ENCODE measurements at regions of chr12 and their contacts with region 1.

Region 1: DNA sequence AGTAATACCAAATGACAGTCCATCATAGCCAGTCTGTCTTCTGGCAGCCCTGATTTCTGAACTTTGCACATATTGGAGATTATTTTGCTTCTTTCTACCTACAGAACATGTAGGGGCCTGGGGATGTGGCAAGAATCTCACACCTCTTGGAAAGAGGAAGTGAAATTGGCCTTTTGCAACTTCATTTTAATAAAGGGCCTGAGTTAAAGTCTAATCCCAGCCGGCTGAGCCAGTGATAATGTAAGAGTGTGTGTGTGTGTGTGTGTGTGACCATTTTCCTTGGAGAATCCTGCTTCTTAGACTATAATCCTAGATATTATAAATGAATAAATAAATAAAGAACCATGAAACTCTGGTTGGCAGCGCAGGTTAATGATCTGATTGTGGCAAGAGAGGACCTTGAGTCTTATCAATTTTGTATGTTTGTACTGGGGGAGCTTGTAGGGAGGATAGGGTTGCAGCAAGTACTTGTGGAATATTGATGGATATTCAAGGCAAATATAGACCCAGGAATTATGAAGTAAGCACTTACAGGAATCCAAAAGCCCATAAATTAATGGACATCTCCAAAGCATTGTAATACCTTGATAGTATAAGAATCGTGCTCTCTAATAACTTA is 233.2 kb upstream of the AMIGO2 start:
- DNase-seq: peak in 1 of 9 experiments; percentile 18
- ATAC-seq: no peak
- H3K4me3 ChIP-seq: no peak overlapping the region
- H3K4me3 Mint-ChIP-seq: no peak overlapping the region
- H3K27ac ChIP-seq: no peak overlapping the region
- H3K27ac Mint-ChIP-seq: no peak overlapping the region
- H3K4me1 ChIP-seq: peaks cover 6% of the 10 kb centered on the region
- H3K4me1 Mint-ChIP-seq: peaks cover 47% of the 10 kb centered on the region
- H3K27me3 ChIP-seq: no peaks in the 10 kb centered on the region
- H3K27me3 Mint-ChIP-seq: no peaks in the 10 kb centered on the region
- CTCF ChIP-seq: no peak

Region 2: DNA sequence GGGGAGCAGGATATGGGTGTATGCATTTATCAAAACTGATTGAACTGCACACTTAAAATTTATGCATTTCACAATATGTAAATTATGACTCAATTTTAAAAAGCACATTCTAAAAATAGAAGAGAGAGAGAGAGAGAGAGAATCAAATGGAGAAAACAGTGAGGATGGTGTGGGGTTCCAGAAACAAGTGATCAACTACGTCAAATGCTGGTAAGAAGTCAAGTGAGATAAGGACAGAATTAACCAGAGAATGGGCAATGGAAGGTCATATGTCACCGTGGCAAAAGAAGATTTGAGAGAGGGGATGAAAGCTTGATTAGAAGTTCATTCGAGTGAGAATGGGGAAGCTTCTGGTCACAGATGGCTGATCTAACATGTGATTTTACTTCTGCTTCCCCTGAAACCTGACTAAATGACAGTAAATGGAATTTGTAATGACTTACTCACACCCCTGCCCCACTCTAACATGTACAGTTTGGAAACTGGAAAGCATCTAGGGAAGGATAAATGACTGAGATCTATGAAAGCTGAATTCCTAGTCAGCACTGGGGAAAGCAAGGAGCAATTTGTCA is 43.3 kb after region 1 on chr12:
- CTCF ChIA-PET with region 1: no interaction called
- POLR2A ChIA-PET with region 1: no interaction called
- intact Hi-C with region 1: loop called in 1 of 2 experiments (anchors 5 kb)
- DNase-seq: peak in 1 of 9 experiments; percentile 47
- ATAC-seq: no peak
- H3K4me3 ChIP-seq: no peak overlapping the region
- H3K4me3 Mint-ChIP-seq: peak overlapping the region; percentile 58
- H3K27ac ChIP-seq: peak overlapping the region in 1 of 2 experiments; percentile 54
- H3K27ac Mint-ChIP-seq: peak overlapping the region; percentile 86
- H3K4me1 ChIP-seq: peaks cover 58% of the 10 kb centered on the region
- H3K4me1 Mint-ChIP-seq: peaks cover 74% of the 10 kb centered on the region
- H3K27me3 ChIP-seq: no peaks in the 10 kb centered on the region
- H3K27me3 Mint-ChIP-seq: no peaks in the 10 kb centered on the region
- CTCF ChIP-seq: no peak